Mammary epithelial cell (primary cell): ENCODE measurements at regions of chr2 and their contacts with region 1.

Region 1: DNA sequence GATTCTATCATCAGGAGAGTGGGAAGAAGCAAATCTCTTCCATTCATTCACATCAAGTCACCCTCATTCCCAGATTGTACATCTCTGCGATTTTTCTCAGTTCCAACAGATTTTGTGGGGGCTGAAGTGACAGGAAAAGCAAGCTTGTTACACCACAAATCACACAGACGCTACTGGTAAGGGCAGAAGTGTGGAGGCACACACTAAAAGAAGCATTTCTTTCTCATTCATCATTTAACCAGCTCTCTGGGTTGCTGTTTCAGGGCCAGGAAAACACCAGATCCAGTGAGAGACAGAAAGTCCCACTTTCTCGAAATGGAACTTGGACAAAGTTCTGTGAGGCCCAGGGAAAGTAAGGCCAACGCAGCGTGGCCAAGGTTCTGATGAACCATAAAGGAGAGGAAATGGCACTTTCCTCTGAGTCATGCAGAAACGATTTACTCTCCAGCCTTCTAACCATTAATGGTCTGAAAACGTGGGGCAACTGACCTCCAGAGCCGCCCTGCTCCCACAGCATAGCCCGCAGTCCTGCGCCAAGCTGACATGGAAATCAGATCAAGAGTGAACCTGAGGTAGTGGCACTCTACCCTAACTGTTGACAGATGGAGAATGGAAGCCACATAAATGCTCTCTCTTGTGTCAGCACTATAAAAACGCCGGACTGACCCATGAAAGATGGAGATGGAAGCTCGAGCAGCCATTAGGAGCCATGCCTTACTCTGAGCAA is 191.0 kb downstream of the C1D start:
- DNase-seq: no peak
- H3K4me3 ChIP-seq: no peak overlapping the region
- H3K27ac ChIP-seq: no peak overlapping the region
- H3K4me1 ChIP-seq: no peaks in the 10 kb centered on the region
- H3K27me3 ChIP-seq: no peaks in the 10 kb centered on the region
- CTCF ChIP-seq: no peak

Region 2: DNA sequence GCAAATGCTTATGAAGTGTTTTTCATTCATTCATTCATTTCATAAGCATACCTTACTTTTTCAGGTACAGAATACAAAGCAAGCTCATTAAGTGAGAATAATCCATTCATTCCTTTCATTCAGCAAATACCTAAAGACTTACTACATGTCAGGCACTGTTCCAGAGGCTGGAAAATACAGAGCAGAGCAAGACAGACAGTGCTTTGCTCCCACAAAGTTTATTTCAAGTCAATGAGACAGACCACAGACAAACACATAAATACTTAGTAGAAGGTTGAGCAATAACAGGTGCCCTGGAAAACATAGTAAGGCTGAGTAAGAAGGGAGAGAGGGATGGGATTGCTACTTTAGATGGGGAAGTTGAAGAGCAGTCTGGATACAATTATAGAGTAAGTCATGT is 118.9 kb before region 1 on chr2:
- CTCF ChIA-PET with region 1: no interaction called
- dilution Hi-C with region 1: no loop called
- in situ Hi-C with region 1: no loop called
- intact Hi-C with region 1: no loop called
- DNase-seq: peak; percentile 68
- H3K4me3 ChIP-seq: no peak overlapping the region
- H3K27ac ChIP-seq: no peak overlapping the region
- H3K4me1 ChIP-seq: peaks cover 7% of the 10 kb centered on the region
- H3K27me3 ChIP-seq: no peaks in the 10 kb centered on the region
- CTCF ChIP-seq: no peak

Region 3: DNA sequence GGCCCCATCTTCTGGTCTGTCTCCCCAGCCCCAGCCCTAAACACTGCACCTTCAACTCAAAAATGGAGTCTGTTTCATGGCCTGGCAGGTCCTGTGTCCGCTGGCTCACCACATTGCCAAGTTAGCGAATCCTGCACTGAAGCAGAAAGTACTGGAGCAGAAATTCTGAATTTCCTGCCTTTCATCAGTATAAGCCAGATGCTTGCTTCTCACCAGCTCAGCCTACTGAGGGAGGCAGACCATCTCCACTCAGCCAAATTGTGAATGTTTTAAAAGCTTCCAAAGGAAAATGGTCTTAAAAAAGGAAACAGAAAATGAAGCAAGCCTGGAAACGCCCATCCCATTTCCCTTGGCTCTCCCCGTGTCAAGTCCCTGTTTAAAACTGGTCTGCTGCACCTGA is 33.1 kb after region 1 on chr2:
- CTCF ChIA-PET with region 1: no interaction called
- dilution Hi-C with region 1: loop called (anchors 5 kb)
- in situ Hi-C with region 1: no loop called
- intact Hi-C with region 1: no loop called
- DNase-seq: no peak
- H3K4me3 ChIP-seq: no peak overlapping the region
- H3K27ac ChIP-seq: no peak overlapping the region
- H3K4me1 ChIP-seq: no peaks in the 10 kb centered on the region
- H3K27me3 ChIP-seq: no peaks in the 10 kb centered on the region
- CTCF ChIP-seq: no peak

Region 4: GRCh38 chr2:67974559-67975430 is 102.9 kb after region 1 on chr2:
- CTCF ChIA-PET with region 1: no interaction called
- dilution Hi-C with region 1: loop called (anchors 5 kb)
- in situ Hi-C with region 1: no loop called
- intact Hi-C with region 1: no loop called
- DNase-seq: no peak
- H3K4me3 ChIP-seq: no peak overlapping the region
- H3K27ac ChIP-seq: no peak overlapping the region
- H3K4me1 ChIP-seq: no peaks in the 10 kb centered on the region
- H3K27me3 ChIP-seq: no peaks in the 10 kb centered on the region
- CTCF ChIP-seq: no peak

Region 5: DNA sequence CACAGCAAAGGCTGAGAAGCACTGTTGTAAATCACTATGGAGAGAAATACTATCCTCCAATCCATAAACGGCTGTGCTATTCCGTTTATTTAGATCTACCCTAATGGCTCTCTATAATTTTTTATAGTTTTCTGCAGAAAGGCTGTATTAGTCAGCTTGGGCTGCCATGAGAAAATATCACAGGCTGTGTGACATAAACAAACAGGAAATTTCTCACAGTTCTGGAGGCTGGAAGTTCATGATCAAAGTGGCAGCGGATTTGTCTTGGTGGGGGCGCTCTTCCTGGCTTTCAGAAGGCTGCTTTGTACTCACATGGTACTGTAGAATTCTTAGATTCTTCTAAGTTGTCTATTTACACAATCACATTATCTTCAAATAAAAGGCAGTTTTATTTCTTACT is 146.9 kb after region 1 on chr2:
- CTCF ChIA-PET with region 1: no interaction called
- dilution Hi-C with region 1: no loop called
- in situ Hi-C with region 1: no loop called
- intact Hi-C with region 1: no loop called
- DNase-seq: no peak
- H3K4me3 ChIP-seq: no peak overlapping the region
- H3K27ac ChIP-seq: no peak overlapping the region
- H3K4me1 ChIP-seq: no peaks in the 10 kb centered on the region
- H3K27me3 ChIP-seq: no peaks in the 10 kb centered on the region
- CTCF ChIP-seq: no peak